ENCODE measurements at regions of chr2 and their contacts with region 1.

Region 1: DNA sequence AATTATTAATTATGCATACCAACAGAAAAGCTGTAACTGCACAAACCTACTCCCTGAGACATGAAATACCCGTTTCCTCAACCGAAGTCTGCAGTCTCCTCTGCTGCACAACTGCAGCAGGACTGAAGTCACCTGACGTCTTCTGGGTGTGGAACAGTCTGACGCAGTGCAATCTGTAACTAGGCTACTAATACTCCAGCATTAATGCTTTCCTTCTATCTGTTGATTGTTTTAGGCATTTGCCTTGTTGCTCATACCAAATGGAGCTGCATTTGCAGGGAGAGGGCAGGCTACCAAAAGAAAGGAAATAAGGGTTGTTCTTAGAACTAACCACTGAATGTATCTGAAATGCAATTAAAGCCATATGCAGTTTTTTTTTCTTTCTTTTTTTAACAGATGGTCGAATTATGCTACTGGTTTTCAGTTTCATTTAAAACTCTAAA is 40.1 kb downstream of the RTN4 start:
- DNase-seq: peak in 1 of 2 donors; percentile 43
- ATAC-seq: peak in 7 of 8 donors; percentile 80 to 92 (median 88)
- H3K4me3 ChIP-seq: peak overlapping the region in 8 of 10 donors; percentile 8 to 46 (median 41)
- H3K27ac ChIP-seq: peak overlapping the region in 5 of 10 donors; percentile 11 to 71 (median 29)
- H3K4me1 ChIP-seq: peaks cover 0 to 88% (median 79%) of the 10 kb centered on the region in 9 donors
- H3K27me3 ChIP-seq: no peaks in the 10 kb centered on the region
- CTCF ChIP-seq: no peak

Region 2: GRCh38 chr2:54723131-54723995 is 286.8 kb before region 1 on chr2 and contains the start of gene EML6:
- intact Hi-C with region 1: loop called in 1 of 10 experiments (anchors 10 kb)
- DNase-seq: peak; percentile 97 to 98
- ATAC-seq: peak; percentile 99 to 100 (median 100)
- H3K4me3 ChIP-seq: peak within 1 kb of the TSS; percentile 65 to 93 (median 82)
- H3K27ac ChIP-seq: peak within 1 kb of the TSS in 9 of 10 donors; percentile 65 to 81 (median 70)
- H3K4me1 ChIP-seq: peaks cover 0 to 17% (median 9%) of the 10 kb centered on the region in 9 donors
- H3K27me3 ChIP-seq: peaks cover 0 to 50% (median 0%) of the 10 kb centered on the region in 7 donors
- CTCF ChIP-seq: peak in 7 of 9 donors; percentile 16 to 47 (median 27)
- total RNA-seq, gene EML6: 0.12 to 1.5 (median 0.32) TPM

Region 3: DNA sequence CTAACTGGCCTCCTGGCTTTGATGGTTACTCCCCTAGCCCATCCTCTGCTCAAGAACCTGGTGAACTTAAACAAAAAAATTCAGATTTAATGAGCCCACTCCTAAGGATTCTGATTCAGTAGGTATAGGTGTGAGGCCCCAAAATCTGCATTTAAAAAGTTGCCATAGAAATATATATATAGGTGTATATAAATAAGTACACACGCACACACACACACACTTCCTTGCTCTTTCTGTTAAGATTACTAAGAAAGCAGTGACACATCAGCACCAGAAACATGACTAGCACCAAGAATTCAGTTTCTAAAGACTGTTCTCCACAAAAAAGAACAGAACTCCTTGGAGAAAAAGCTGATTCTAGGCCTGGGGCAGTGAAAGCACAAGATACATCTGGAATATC is 268.9 kb before region 1 on chr2:
- intact Hi-C with region 1: no loop called
- DNase-seq: no peak
- ATAC-seq: no peak
- H3K4me3 ChIP-seq: no peak overlapping the region
- H3K27ac ChIP-seq: no peak overlapping the region
- H3K4me1 ChIP-seq: no peaks in the 10 kb centered on the region
- H3K27me3 ChIP-seq: peaks cover 0 to 9% (median 0%) of the 10 kb centered on the region in 7 donors
- CTCF ChIP-seq: no peak

Region 4: DNA sequence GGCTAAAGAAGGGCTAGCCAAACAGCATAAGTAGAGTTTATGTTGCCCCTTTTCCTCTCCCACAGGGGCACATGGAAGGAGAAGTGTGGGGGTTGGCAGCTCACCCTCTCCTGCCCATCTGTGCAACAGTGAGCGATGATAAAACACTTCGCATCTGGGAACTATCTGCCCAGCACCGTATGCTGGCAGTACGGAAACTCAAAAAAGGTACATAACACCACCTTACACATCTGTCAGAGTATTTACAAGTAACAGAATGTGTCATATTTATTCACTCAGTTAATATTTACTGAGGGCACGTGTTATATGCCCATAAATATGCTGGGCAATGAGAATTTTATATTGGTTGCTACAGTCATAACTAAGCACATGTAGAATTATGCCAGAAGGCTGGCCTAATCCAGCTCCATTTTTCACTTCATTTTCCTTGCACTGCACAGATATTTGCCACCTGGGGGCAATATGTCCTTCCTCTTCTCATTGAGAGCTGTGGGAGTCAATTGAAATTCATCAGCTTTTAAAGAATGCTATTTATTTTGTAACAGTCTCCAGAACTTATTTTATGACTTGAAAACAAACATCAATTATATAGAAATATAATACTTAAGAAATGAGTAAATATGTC is 110.5 kb before region 1 on chr2:
- intact Hi-C with region 1: loop called in 5 of 10 experiments (anchors 2 to 10 kb)
- DNase-seq: no peak
- ATAC-seq: peak in 6 of 8 donors; percentile 52 to 76 (median 70)
- H3K4me3 ChIP-seq: no peak overlapping the region
- H3K27ac ChIP-seq: no peak overlapping the region
- H3K4me1 ChIP-seq: peaks cover 0 to 12% (median 0%) of the 10 kb centered on the region in 9 donors
- H3K27me3 ChIP-seq: no peaks in the 10 kb centered on the region
- CTCF ChIP-seq: peak; percentile 20 to 77 (median 63)

Region 5: GRCh38 chr2:55168221-55169154 is 158.3 kb after region 1 on chr2:
- intact Hi-C with region 1: loop called in 6 of 10 experiments (anchors 1 to 10 kb)
- DNase-seq: peak in 1 of 2 donors; percentile 52
- ATAC-seq: peak; percentile 63 to 80 (median 72)
- H3K4me3 ChIP-seq: no peak overlapping the region
- H3K27ac ChIP-seq: peak overlapping the region in 6 of 10 donors; percentile 5 to 53 (median 27)
- H3K4me1 ChIP-seq: peaks cover 0 to 39% (median 15%) of the 10 kb centered on the region in 9 donors
- H3K27me3 ChIP-seq: no peaks in the 10 kb centered on the region
- CTCF ChIP-seq: peak; percentile 50 to 82 (median 76)

Region 6: DNA sequence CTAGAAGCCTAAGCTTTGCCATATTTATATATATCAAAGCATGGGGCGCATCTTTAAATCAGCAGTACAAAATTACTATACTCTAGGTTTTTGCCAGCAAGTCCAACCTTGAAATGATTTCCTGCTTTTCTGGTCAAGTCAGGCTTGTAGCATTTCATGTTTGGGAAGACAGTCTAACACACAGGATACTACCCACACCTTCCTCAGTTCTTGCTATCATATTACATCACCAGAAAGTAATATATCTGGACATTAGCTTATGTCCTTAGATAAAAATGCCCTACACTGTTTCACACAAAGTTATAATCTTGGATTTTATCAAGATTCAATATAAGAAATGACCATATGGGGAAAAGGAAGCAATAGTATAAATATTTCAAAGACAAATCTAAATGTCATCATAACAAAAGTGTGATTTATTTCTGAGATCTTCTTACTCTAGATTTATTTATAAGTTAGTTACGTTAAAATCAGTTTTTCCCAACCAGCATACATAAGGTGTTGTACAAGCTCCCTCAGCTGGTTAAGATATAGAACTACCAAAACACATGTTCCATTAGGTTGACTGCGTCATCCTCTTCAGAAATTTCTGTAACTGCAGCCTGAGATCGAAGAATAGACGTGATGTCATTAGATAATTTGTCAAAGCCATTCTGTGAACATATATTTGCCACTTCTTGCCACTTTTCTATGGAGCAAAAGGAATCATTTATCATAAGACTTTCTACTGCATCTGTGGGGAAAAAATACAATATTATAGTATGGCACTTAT is 165.3 kb after region 1 on chr2:
- intact Hi-C with region 1: loop called in 2 of 10 experiments (anchors 2 to 10 kb)
- DNase-seq: no peak
- ATAC-seq: peak in 7 of 8 donors; percentile 66 to 80 (median 72)
- H3K4me3 ChIP-seq: no peak overlapping the region
- H3K27ac ChIP-seq: no peak overlapping the region
- H3K4me1 ChIP-seq: peaks cover 0 to 8% (median 0%) of the 10 kb centered on the region in 9 donors
- H3K27me3 ChIP-seq: no peaks in the 10 kb centered on the region
- CTCF ChIP-seq: peak; percentile 33 to 78 (median 67)

Region 7: GRCh38 chr2:55223958-55224760 is 214.0 kb after region 1 on chr2:
- intact Hi-C with region 1: loop called in 1 of 10 experiments (anchors 5 kb)
- DNase-seq: peak in 1 of 2 donors; percentile 27
- ATAC-seq: peak in 6 of 8 donors; percentile 18 to 35 (median 30)
- H3K4me3 ChIP-seq: peak overlapping the region; percentile 60 to 91 (median 79)
- H3K27ac ChIP-seq: peak overlapping the region in 9 of 10 donors; percentile 78 to 98 (median 94)
- H3K4me1 ChIP-seq: peaks cover 0 to 38% (median 28%) of the 10 kb centered on the region in 9 donors
- H3K27me3 ChIP-seq: no peaks in the 10 kb centered on the region
- CTCF ChIP-seq: no peak